ENCODE measurements at regions of chr1 and their contacts with region 1.

Region 1: GRCh38 chr1:3283849-3284248 is 170.6 kb upstream of the ARHGEF16 start:
- DNase-seq: no peak
- H3K4me3 ChIP-seq: no peak overlapping the region
- H3K27me3 ChIP-seq: peaks cover 6% of the 10 kb centered on the region; the same call in 1 of the 2 replicates
- CTCF ChIP-seq: peak; percentile 54

Region 2: GRCh38 chr1:3304246-3304645 is 20.4 kb after region 1 on chr1:
- CTCF ChIA-PET with region 1: no interaction called
- POLR2A ChIA-PET with region 1: interaction called, 12 read pairs
- DNase-seq: no peak
- H3K4me3 ChIP-seq: no peak overlapping the region
- H3K27me3 ChIP-seq: peaks cover 20% of the 10 kb centered on the region
- CTCF ChIP-seq: no peak

Region 3: GRCh38 chr1:3423245-3423829 is 139.5 kb after region 1 on chr1:
- CTCF ChIA-PET with region 1: no interaction called
- POLR2A ChIA-PET with region 1: no interaction called
- DNase-seq: no peak
- H3K4me3 ChIP-seq: no peak overlapping the region
- H3K27me3 ChIP-seq: peaks cover 6% of the 10 kb centered on the region; the same call in 1 of the 2 replicates
- CTCF ChIP-seq: no peak

Measured in BJ (cell line).